OCI-LY7 (cell line): ENCODE measurements at regions of chr1 and their contacts with region 1.

Region 1: GRCh38 chr1:84143796-84144565 is at the start of gene PRKACB:
- DNase-seq: peak; percentile 86
- H3K4me3 ChIP-seq: peak within 1 kb of the TSS; percentile 78
- H3K27ac ChIP-seq: peak within 1 kb of the TSS; percentile 89
- H3K4me1 ChIP-seq: peaks cover 38% of the 10 kb centered on the region
- CTCF ChIP-seq: no peak
- total RNA-seq, gene PRKACB: 14.1 and 16.6 TPM in 2 replicates

Region 2: GRCh38 chr1:83761167-83762038 is 382.6 kb before region 1 on chr1:
- CTCF ChIA-PET with region 1: no interaction called
- POLR2A ChIA-PET with region 1: interaction called, 3 read pairs
- intact Hi-C with region 1: loop called (anchors 10 kb)
- DNase-seq: peak; percentile 96
- H3K4me3 ChIP-seq: peak overlapping the region; percentile 63
- H3K27ac ChIP-seq: peak overlapping the region; percentile 96
- H3K4me1 ChIP-seq: peaks cover 69% of the 10 kb centered on the region
- CTCF ChIP-seq: peak; percentile 31

Region 3: GRCh38 chr1:84198832-84199231 is 54.9 kb after region 1 on chr1:
- CTCF ChIA-PET with region 1: no interaction called
- POLR2A ChIA-PET with region 1: no interaction called
- intact Hi-C with region 1: no loop called
- DNase-seq: no peak
- H3K4me3 ChIP-seq: no peak overlapping the region
- H3K27ac ChIP-seq: no peak overlapping the region
- H3K4me1 ChIP-seq: no peaks in the 10 kb centered on the region
- CTCF ChIP-seq: no peak

Region 4: GRCh38 chr1:84271441-84272151 is 127.6 kb after region 1 on chr1:
- CTCF ChIA-PET with region 1: no interaction called
- POLR2A ChIA-PET with region 1: interaction called, 10 read pairs
- intact Hi-C with region 1: no loop called
- DNase-seq: peak; percentile 85
- H3K4me3 ChIP-seq: peak overlapping the region; percentile 57
- H3K27ac ChIP-seq: peak overlapping the region; percentile 90
- H3K4me1 ChIP-seq: peaks cover 30% of the 10 kb centered on the region
- CTCF ChIP-seq: no peak

Region 5: GRCh38 chr1:84377480-84378095 is 233.6 kb after region 1 on chr1:
- CTCF ChIA-PET with region 1: no interaction called
- POLR2A ChIA-PET with region 1: no interaction called
- intact Hi-C with region 1: no loop called
- DNase-seq: no peak
- H3K4me3 ChIP-seq: no peak overlapping the region
- H3K27ac ChIP-seq: no peak overlapping the region
- H3K4me1 ChIP-seq: no peaks in the 10 kb centered on the region
- CTCF ChIP-seq: no peak

Region 6: GRCh38 chr1:84478876-84479868 is 335.2 kb after region 1 on chr1 and contains the start of gene RPF1:
- CTCF ChIA-PET with region 1: no interaction called
- POLR2A ChIA-PET with region 1: interaction called, 13 read pairs
- intact Hi-C with region 1: no loop called
- DNase-seq: peak; percentile 88
- H3K4me3 ChIP-seq: peak within 1 kb of the TSS; percentile 77
- H3K27ac ChIP-seq: peak within 1 kb of the TSS; percentile 63
- H3K4me1 ChIP-seq: peaks cover 21% of the 10 kb centered on the region
- CTCF ChIP-seq: peak; percentile 23; the same call in 1 of the 2 replicates
- total RNA-seq, gene RPF1: 56.3 and 57.9 TPM in 2 replicates

Region 7: GRCh38 chr1:84620720-84621313 is 476.8 kb after region 1 on chr1:
- CTCF ChIA-PET with region 1: interaction called, 3 read pairs
- POLR2A ChIA-PET with region 1: interaction called, 3 read pairs
- intact Hi-C with region 1: loop called (anchors 1 kb)
- DNase-seq: peak; percentile 87
- H3K4me3 ChIP-seq: peak overlapping the region; percentile 73
- H3K27ac ChIP-seq: peak overlapping the region; percentile 38
- H3K4me1 ChIP-seq: peaks cover 9% of the 10 kb centered on the region
- CTCF ChIP-seq: peak; percentile 100

Region 8: GRCh38 chr1:84772428-84772943 is 628.5 kb after region 1 on chr1:
- CTCF ChIA-PET with region 1: no interaction called
- POLR2A ChIA-PET with region 1: no interaction called
- intact Hi-C with region 1: loop called (anchors 1 kb)
- DNase-seq: peak; percentile 65
- H3K4me3 ChIP-seq: no peak overlapping the region
- H3K27ac ChIP-seq: no peak overlapping the region
- H3K4me1 ChIP-seq: no peaks in the 10 kb centered on the region
- CTCF ChIP-seq: peak; percentile 95